HepG2 (cell line): ENCODE measurements at regions of chr9 and their contacts with region 1.

Region 1: DNA sequence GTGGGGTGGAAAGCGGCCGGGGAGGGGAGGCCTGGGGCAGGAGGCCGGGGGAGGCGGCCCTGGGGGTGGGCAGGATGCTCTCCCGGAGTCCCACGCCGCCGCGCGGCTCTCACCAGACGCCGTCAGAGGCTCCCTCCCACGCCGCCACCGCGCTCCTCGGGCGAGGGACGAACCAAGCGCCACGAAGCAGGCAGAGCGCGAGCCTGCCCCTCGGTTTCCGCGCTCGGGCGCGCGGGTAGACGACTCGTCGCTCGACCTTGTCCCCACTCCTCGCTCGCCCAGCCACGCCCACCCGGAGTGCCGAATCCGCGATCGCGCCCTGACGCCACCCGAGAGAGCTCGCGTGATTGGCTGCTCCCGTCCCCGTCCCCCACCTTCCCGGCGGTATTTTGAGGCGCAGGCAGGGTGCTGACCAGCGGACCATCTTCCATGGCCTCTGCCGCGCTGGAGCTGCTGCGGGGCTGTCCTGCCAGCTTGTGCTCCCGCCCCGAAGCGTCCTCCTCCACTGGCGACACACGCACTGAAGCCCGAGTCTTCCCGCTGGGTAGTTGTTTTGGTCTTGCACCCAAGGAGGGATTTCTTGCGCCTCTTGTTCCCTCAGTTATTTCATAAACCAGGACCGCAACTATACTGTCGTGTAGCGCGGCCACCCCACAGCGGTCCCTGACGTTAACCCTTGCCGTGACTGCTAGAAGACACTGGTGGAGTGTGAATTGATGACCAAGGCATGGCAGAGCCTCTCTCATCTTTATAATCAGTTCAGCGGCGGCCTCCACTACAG is at the start of gene GNE:
- DNase-seq: peak; percentile 89
- ATAC-seq: peak; percentile 94
- H3K4me3 ChIP-seq: peak within 1 kb of the TSS; percentile 72 to 85 (median 75)
- H3K27ac ChIP-seq: peak within 1 kb of the TSS; percentile 83
- H3K4me1 ChIP-seq: peaks cover 23% of the 10 kb centered on the region
- H3K27me3 ChIP-seq: no peaks in the 10 kb centered on the region; a peak in 1 of 5 replicates
- CTCF ChIP-seq: peak; percentile 16; the same call in 1 of the 2 replicates
- EP300 ChIP-seq: peak in 1 of 2 experiments; percentile 8; a peak in 1 of 4 replicates
- POLR2A ChIP-seq: peak; percentile 98 to 99
- RAD21 ChIP-seq: peak; percentile 31; the same call in 1 of the 2 replicates
- total RNA-seq, gene GNE: 24.1 and 38.8 TPM in 2 replicates

Region 2: DNA sequence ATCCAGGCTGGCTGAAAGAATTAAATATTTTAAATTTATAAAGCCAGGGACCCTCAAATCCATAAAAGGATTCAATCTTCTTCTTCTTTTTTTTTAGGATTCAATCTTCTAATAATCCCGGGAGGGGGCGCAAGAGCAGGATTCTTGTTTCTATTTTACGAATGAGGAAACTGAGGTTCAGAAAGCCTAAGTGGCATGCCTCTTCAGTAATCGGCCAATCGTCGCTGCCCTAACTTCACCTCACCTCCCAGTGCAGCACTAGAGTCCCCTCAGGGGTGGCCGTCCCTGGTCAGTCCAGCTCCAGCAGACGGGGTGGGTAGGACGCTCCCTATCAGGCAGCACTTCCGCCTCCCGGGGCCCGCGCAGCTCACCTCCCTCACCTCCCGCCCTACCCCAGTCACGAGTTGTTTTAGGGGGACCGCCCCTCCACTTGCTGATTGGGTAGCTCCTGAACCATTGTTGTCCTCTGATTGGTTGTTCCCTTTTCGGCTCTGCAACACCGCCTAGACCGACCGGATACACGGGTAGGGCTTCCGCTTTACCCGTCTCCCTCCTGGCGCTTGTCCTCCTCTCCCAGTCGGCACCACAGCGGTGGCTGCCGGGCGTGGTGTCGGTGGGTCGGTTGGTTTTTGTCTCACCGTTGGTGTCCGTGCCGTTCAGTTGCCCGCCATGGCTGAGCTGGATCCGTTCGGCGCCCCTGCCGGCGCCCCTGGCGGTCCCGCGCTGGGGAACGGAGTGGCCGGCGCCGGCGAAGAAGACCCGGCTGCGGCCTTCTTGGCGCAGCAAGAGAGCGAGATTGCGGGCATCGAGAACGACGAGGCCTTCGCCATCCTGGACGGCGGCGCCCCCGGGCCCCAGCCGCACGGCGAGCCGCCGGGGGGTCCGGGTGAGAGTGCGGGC is 67.8 kb before region 1 on chr9 and contains the start of gene CLTA:
- CTCF ChIA-PET with region 1: no interaction called
- POLR2A ChIA-PET with region 1: interaction called, 23 read pairs
- in situ Hi-C with region 1: no loop called
- intact Hi-C with region 1: no loop called
- DNase-seq: peak; percentile 99
- ATAC-seq: peak; percentile 98
- H3K4me3 ChIP-seq: peak within 1 kb of the TSS; percentile 84 to 86 (median 85)
- H3K27ac ChIP-seq: peak within 1 kb of the TSS; percentile 76
- H3K4me1 ChIP-seq: peaks cover 36% of the 10 kb centered on the region
- H3K27me3 ChIP-seq: no peaks in the 10 kb centered on the region; a peak in 1 of 5 replicates
- CTCF ChIP-seq: peak; percentile 51
- EP300 ChIP-seq: 0 out of 4 replicates have a peak, but pooled peaks of 1 of the 2 experiments have one; percentile 8
- POLR2A ChIP-seq: peak; percentile 95 to 98
- RAD21 ChIP-seq: peak; percentile 33; the same call in 1 of the 2 replicates
- total RNA-seq, gene CLTA: 222 and 227 TPM in 2 replicates

Region 3: GRCh38 chr9:36306471-36307306 is 48.3 kb after region 1 on chr9:
- CTCF ChIA-PET with region 1: no interaction called
- POLR2A ChIA-PET with region 1: interaction called, 18 read pairs
- in situ Hi-C with region 1: no loop called
- intact Hi-C with region 1: no loop called
- DNase-seq: peak; percentile 85
- ATAC-seq: peak; percentile 93
- H3K4me3 ChIP-seq: peak overlapping the region in 1 of 3 experiments; percentile 12; a peak in 4 of 6 replicates
- H3K27ac ChIP-seq: peak overlapping the region; percentile 49
- H3K4me1 ChIP-seq: peaks cover 13% of the 10 kb centered on the region
- H3K27me3 ChIP-seq: no peaks in the 10 kb centered on the region
- CTCF ChIP-seq: no peak
- EP300 ChIP-seq: peak in 1 of 2 experiments; percentile 6; a peak in 1 of 4 replicates
- POLR2A ChIP-seq: 0 out of 4 replicates have a peak, but pooled peaks of 1 of the 2 experiments have one; percentile 36
- RAD21 ChIP-seq: no peak

Region 4: DNA sequence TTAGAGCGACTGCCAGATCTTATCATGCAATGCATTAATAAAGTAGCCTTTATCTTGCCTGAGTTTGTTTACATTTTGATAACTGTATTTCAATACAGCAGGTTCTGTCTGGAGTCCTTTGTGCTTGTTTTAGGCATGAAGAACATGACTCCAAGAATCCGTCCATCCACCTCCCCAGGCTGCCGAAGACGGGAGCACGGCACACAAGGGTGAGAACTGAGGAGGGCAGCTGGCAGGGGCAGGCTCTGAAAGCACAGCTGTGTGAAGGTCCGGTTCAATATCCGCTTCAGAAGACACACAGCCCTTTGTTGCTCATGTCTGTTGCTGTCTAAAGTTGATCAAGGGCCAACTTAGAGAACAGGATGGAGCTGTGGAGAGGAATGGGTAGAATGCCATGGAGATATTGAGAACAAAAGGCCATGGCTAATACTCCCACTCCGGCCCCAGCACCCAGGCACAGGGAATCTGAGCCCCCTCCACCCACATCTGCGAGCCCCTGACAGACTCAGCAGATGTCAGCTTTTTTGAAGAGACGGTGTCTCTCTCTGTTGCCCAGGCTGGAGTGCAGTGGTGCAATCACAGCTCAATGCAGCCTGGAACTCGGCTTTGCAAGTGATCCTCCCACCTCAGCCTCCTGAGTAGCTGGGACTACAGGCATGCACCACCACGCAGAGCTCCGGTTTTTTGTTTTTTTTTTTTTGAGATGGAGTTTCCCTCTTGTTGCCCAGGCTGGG is 58.4 kb after region 1 on chr9:
- CTCF ChIA-PET with region 1: no interaction called
- POLR2A ChIA-PET with region 1: interaction called, 11 read pairs
- in situ Hi-C with region 1: no loop called
- intact Hi-C with region 1: loop called (anchors 1 kb)
- DNase-seq: peak; percentile 82
- ATAC-seq: peak; percentile 69
- H3K4me3 ChIP-seq: peak overlapping the region in 2 of 3 experiments; percentile 22 to 67; a peak in 4 of 6 replicates
- H3K27ac ChIP-seq: no peak overlapping the region
- H3K4me1 ChIP-seq: peaks cover 65% of the 10 kb centered on the region
- H3K27me3 ChIP-seq: no peaks in the 10 kb centered on the region
- CTCF ChIP-seq: no peak
- EP300 ChIP-seq: no peak
- POLR2A ChIP-seq: no peak
- RAD21 ChIP-seq: no peak

Region 5: GRCh38 chr9:36328798-36329411 is 70.5 kb after region 1 on chr9:
- CTCF ChIA-PET with region 1: no interaction called
- POLR2A ChIA-PET with region 1: interaction called, 16 read pairs
- in situ Hi-C with region 1: no loop called
- intact Hi-C with region 1: no loop called
- DNase-seq: peak; percentile 70
- ATAC-seq: peak; percentile 52
- H3K4me3 ChIP-seq: no peak overlapping the region
- H3K27ac ChIP-seq: no peak overlapping the region
- H3K4me1 ChIP-seq: peaks cover 39% of the 10 kb centered on the region
- H3K27me3 ChIP-seq: no peaks in the 10 kb centered on the region
- CTCF ChIP-seq: peak; percentile 80
- EP300 ChIP-seq: no peak
- POLR2A ChIP-seq: no peak
- RAD21 ChIP-seq: peak; percentile 63

Region 6: DNA sequence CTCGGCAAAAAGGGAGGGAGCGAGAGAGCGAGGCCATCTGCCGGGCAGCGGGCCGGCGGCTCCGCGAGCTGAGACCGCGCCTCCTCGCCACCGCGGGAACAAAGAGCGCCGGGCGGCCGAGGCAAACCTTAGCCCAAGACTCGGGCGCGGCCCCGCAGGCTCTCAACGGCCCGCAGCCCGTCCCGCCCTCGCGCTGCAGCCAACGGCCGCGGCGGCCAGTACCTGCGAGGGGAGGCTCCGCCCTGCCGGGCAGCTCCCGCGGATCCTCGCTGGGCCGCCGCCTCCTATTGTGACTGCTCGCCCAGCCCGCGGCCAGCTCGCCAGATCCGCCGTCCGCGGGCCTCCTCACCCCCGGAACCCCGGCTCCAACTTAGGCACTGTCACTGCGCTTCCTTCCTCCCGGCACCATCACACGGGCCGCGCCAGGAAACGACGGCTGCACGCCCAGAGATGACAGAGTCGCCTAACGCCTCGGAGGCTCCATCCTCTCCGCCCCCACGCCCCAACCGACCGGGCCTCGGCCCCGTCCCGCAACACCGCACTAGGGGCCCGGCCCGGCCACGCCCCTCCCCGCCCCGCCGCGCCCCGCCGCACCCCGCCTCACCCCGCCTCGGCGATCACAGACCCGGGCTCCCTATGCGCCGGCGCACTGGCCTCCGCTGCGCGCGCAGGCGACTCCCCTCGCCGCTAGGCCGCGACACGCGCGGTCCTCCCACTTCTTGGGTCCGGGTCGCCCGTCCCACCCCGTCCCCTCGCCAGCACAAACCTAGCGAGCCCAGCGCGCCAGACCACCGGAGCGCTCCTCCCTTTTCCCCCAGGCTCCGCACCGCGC is 142.2 kb after region 1 on chr9:
- CTCF ChIA-PET with region 1: no interaction called
- POLR2A ChIA-PET with region 1: interaction called, 11 read pairs
- in situ Hi-C with region 1: no loop called
- intact Hi-C with region 1: no loop called
- DNase-seq: peak; percentile 77
- ATAC-seq: peak; percentile 88
- H3K4me3 ChIP-seq: peak overlapping the region; percentile 77 to 100 (median 85)
- H3K27ac ChIP-seq: peak overlapping the region; percentile 84
- H3K4me1 ChIP-seq: peaks cover 28% of the 10 kb centered on the region
- H3K27me3 ChIP-seq: no peaks in the 10 kb centered on the region; a peak in 1 of 5 replicates
- CTCF ChIP-seq: peak; percentile 45
- EP300 ChIP-seq: peak; percentile 8 to 34; a peak in 1 of 4 replicates
- POLR2A ChIP-seq: peak; percentile 56 to 64
- RAD21 ChIP-seq: no peak; the same call in 1 of the 2 replicates